ENCODE measurements at regions of chr18 and their contacts with region 1.

Region 1: DNA sequence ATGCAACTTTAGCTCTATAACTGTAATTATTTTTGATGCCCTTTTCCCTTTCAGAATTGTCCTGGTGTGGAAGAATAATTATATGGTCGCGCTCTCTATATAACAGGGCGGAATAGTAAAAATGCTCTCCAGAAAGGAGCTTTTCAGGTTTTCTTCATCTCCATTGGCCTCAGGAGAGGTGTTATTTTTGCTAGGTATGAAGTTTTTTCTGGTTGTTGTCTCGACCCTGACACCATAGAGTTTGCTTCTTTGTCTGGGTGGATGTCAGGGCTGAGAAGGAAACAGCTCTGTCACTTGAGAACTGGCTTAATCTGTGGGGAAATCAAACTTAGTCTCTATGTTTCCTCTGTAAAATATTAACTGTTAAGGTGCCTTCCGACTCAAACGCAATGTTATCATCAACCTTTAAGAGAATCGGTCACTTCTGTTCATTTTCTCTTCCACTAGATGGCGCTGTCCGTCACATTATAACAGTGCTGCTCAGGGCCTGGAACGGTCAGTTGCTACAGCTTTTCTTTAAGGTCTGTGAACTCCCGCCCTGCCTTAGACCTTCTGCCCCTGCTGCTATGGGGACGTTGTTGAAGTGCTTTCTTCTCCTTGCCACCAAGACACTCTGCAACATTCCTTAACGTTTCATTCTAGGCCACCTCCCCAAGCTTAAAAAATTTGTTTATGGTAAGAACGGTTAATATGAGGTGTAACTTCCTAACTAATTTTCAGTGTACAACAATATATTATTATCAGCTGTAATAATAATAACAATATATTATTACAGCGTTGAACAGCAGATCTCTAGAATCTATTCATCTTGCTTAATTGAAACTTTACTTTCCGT is 23.8 kb upstream of the SERPINB12 start:
- DNase-seq: no peak
- ATAC-seq: peak; percentile 80

Region 2: GRCh38 chr18:63578357-63578958 is 60.1 kb after region 1 on chr18:
- intact Hi-C with region 1: no loop called
- DNase-seq: no peak
- ATAC-seq: no peak

Region 3: DNA sequence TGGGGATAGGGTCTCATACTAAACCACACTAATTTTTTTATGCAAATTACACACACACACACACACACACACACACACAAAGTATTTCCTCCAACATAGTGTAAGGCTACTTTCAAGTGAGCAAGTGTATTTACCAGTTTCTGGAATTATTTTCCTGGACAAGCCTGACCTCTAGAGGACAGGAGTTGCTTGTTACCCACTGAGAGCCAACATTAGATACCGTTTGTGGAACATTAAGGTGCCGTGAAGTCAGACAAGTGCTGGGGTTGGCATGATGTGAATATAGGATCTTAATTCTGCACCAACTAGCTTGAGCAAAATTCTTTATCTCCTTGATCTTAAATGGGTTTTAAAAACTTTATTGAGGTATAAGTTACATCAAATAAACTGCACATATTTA is 329.8 kb after region 1 on chr18:
- intact Hi-C with region 1: loop called (anchors 10 kb)
- DNase-seq: no peak
- ATAC-seq: no peak

Region 4: DNA sequence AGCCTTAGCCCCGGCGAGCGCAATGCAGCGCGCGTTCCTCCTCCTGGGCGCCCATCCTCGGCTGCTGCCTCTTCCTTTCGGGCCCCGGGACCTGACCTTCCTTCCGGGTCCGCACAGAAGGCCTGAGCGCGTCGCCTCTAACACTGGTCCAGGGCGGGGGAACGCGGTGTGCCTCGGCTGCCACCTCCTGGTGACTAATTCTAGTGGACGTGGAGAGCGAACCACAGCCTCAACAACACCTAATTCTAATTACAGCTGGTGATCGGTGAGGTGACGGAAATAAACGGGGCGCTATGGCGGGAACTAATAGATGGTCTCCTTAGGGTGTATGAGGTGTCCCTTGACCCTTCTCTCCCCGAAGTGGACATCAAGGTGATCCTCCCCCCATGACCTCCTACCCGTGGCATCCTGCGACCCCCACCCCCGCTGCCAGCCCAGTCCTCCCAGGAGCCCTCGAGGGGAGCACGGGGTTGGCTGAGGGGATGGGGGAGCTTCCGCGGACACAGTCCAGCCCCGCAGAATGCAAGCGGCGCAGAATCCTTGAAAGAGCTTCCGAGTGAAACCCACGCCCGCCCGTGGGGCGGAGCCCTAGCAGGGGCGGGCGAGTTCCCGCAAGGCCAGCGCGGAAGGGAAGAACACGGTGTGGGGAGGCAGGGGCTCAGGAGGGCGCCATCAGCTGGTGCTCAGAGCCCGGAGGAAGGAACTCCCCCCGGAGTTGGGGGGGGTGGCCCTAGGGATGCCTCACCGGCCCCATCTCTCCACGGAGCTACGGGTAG is 417.9 kb after region 1 on chr18:
- intact Hi-C with region 1: loop called (anchors 5 kb)
- DNase-seq: peak; percentile 89
- ATAC-seq: peak; percentile 100